B cell (primary cell): ENCODE measurements at regions of chr5 and their contacts with region 1.

Region 1: DNA sequence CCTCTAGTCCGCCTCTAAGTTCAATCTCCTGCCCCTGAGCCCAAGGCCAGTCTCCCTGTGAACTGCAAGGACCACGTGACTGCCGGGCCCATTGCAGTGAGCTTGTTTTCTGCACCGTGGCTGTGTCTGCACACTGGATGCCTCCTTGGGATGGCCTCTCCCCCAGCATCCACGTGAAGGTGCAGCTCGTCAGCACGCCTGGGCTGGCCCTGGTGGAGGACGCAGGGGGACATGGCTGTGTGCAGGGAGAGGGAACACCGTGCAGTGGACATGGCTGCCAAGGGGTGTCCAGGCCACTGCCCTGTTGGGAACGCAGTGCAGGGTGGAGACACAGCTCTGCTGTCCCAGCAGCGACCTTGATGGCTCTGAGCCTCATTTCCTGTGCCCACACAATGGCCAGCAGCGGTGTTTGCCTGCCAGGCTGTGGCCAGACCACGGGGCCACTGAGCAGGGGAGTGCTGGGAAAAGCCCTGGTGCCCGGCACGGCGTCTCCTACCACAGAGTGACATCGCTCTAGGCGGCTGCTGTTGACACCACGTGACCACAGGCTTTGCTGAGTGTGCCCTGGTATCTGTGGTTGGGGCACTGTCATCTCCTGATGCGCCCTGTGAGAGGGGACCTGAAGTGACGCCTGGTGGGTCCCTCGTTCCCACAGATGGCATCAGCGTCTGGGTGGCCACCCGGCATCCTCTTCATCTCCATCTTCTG is 26.9 kb upstream of the EXOC3 start:
- DNase-seq: no peak
- ATAC-seq: no peak
- H3K4me3 ChIP-seq: no peak overlapping the region
- H3K4me3 Mint-ChIP-seq: peak overlapping the region; percentile 65
- H3K27ac ChIP-seq: no peak overlapping the region
- H3K27ac Mint-ChIP-seq: no peak overlapping the region
- H3K4me1 ChIP-seq: no peaks in the 10 kb centered on the region
- H3K4me1 Mint-ChIP-seq: peaks cover 5% of the 10 kb centered on the region
- H3K27me3 ChIP-seq: peaks cover 0 to 3% (median 0%) of the 10 kb centered on the region in 4 experiments
- H3K27me3 Mint-ChIP-seq: peaks cover 7% of the 10 kb centered on the region
- CTCF ChIP-seq: no peak

Region 2: GRCh38 chr5:463952-464351 is 47.9 kb after region 1 on chr5:
- CTCF ChIA-PET with region 1: interaction called, 3 read pairs
- POLR2A ChIA-PET with region 1: no interaction called
- intact Hi-C with region 1: loop called (anchors 2 kb)
- DNase-seq: peak; percentile 91
- ATAC-seq: peak; percentile 95
- H3K4me3 ChIP-seq: no peak overlapping the region
- H3K4me3 Mint-ChIP-seq: peak overlapping the region; percentile 51
- H3K27ac ChIP-seq: peak overlapping the region; percentile 62 to 65
- H3K27ac Mint-ChIP-seq: peak overlapping the region; percentile 59
- H3K4me1 ChIP-seq: peaks cover 16 to 21% of the 10 kb centered on the region in 2 donors
- H3K4me1 Mint-ChIP-seq: peaks cover 16% of the 10 kb centered on the region
- H3K27me3 ChIP-seq: no peaks in the 10 kb centered on the region
- H3K27me3 Mint-ChIP-seq: no peaks in the 10 kb centered on the region
- CTCF ChIP-seq: no peak